ENCODE measurements at regions of chr19 and their contacts with region 1.

Region 1: DNA sequence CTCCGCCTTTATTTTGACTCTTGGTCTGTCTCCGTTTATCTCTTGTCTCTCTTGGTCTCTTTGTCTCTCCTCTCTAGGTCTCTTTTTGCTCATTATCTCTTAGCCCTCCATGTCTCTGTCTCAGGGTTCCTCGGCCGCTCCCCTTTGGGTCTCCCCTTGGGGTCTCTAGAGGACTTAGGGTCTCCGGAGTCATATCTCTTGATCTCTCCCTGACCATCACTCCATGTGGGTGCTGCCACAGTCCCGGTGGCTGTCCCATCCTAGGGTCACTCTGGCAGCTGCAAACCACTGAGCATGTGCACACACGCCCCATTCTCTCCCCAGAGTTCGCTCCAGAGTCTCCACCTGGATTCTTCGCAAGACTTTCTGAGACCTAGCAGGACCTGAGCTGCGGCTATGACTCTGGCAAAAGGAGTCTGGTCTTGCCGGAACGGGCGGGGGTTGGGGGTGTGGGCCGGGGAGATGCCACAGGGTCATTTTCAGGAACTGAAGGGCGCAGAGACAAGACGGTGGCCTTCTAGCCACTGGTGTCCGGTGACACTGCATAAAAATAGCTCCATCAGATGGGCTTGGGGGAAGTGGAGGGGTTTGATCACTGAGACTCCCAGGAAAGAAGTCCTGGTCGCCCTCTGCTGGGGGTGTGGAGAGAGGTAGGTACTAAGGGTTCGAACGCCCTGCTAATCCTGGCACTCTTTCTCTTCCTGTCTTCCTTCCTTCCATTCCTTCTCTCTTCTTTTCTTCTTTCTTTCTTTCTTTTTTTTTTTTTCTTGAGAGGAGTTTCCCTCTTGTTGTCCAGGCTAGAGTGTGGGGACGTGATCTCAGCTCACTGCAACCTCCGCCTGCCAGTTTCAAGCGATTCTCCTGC is 1.2 kb upstream of the KCNA7 start:
- DNase-seq: peak; percentile 65 to 73
- ATAC-seq: peak; percentile 77 to 86
- H3K4me3 ChIP-seq: peak overlapping the region; percentile 6; the same call in 1 of the 3 replicates
- H3K27ac ChIP-seq: 0 out of 6 replicates have a peak overlapping the region, but pooled peaks of 1 of the 2 experiments have one; percentile 9
- H3K4me1 ChIP-seq: peaks cover 16% of the 10 kb centered on the region
- CTCF ChIP-seq: peak; percentile 62
- EP300 ChIP-seq: no peak
- POLR2A ChIP-seq: no peak
- RAD21 ChIP-seq: peak; percentile 40 to 66; a peak in 4 of 5 replicates

Region 2: GRCh38 chr19:48975947-48976847 is 97.5 kb before region 1 on chr19:
- CTCF ChIA-PET with region 1: interaction called, 17 read pairs
- POLR2A ChIA-PET with region 1: no interaction called
- DNase-seq: peak in 1 of 2 experiments; percentile 47
- ATAC-seq: peak; percentile 46 to 72; a peak in 5 of 6 replicates
- H3K4me3 ChIP-seq: no peak overlapping the region
- H3K27ac ChIP-seq: no peak overlapping the region
- H3K4me1 ChIP-seq: peaks cover 13% of the 10 kb centered on the region
- CTCF ChIP-seq: no peak
- EP300 ChIP-seq: no peak
- POLR2A ChIP-seq: no peak
- RAD21 ChIP-seq: no peak

Region 3: DNA sequence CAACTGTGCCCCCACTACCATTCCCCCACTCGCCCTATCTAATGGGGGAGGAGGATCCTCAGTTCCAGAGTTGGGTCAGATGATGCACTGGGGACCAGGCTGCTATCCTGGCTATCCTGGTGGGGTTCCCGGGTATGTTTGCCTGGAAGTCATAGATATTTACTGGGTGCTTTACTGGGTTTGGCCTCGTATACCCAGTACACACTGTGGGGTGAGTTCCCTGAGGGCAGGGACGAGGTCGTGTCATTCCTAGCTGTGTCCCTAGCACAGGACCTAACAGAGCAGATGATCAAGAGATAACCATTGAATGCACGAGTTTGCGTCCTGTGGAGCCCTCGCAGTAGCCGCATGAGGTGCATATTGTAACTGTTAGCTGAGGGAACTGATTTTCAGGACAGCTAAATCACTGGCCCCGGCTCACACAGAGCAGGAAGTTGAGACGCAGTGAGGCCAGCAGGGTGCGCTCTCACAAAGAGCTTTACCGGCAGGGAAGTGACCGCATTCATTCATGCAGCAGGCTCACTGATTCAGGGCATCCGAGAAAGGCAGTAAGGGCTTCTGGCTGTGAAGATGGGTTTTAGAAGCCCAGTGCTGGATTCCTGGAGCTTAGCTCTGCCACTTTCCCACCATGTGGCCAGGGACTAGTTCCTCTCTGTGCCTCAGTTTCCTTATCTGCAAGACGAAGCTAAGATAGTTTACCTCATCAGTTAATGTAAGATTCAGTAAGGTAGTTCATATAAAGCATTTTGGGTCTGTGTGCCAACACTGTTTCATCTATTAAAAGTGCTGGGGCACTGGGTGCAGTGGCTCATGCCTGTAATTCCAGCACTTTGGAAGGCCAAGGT is 74.0 kb before region 1 on chr19:
- CTCF ChIA-PET with region 1: interaction called, 121 read pairs
- POLR2A ChIA-PET with region 1: interaction called, 4 read pairs
- DNase-seq: peak; percentile 81 to 85
- ATAC-seq: peak; percentile 84 to 89
- H3K4me3 ChIP-seq: no peak overlapping the region
- H3K27ac ChIP-seq: no peak overlapping the region
- H3K4me1 ChIP-seq: peaks cover 9% of the 10 kb centered on the region; the same call in 2 of the 3 replicates
- CTCF ChIP-seq: peak; percentile 82
- EP300 ChIP-seq: no peak
- POLR2A ChIP-seq: no peak
- RAD21 ChIP-seq: peak; percentile 69

Region 4: GRCh38 chr19:49017666-49018351 is 55.9 kb before region 1 on chr19:
- CTCF ChIA-PET with region 1: interaction called, 29 read pairs
- POLR2A ChIA-PET with region 1: no interaction called
- DNase-seq: peak in 1 of 2 experiments; percentile 52
- ATAC-seq: peak; percentile 27 to 66
- H3K4me3 ChIP-seq: peak overlapping the region; percentile 21; the same call in 1 of the 3 replicates
- H3K27ac ChIP-seq: peak overlapping the region in 1 of 2 experiments; percentile 36; a peak in 1 of 6 replicates
- H3K4me1 ChIP-seq: peaks cover 14% of the 10 kb centered on the region; the same call in 2 of the 3 replicates
- CTCF ChIP-seq: peak; percentile 33
- EP300 ChIP-seq: no peak
- POLR2A ChIP-seq: no peak
- RAD21 ChIP-seq: no peak

Region 5: DNA sequence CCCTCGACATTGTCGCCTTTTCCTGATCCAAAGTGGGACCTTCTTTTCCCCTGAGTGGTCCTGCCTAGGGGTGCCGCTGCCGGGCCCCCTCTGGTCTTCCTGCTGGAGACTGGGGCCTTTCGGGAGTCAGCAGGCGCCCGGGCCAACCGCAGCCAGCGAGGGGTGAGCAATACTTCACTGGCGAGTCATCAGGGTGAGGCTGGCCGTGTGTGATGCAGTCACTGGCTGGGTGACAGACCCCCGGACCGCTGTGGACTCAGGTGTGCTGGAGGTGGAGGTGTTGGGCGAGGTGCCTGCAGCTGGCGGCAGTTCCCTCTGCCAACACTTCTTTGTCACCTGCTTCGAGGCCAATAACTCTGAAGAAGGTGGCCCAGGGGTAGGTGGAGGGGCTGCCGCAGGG is 31.6 kb before region 1 on chr19:
- CTCF ChIA-PET with region 1: no interaction called
- POLR2A ChIA-PET with region 1: no interaction called
- DNase-seq: peak in 1 of 2 experiments; percentile 35
- ATAC-seq: 0 out of 6 replicates have a peak, but pooled peaks of 1 of the 2 experiments have one; percentile 20
- H3K4me3 ChIP-seq: no peak overlapping the region
- H3K27ac ChIP-seq: peak overlapping the region; percentile 21 to 65; a peak in 4 of 6 replicates
- H3K4me1 ChIP-seq: peaks cover 32% of the 10 kb centered on the region
- CTCF ChIP-seq: no peak
- EP300 ChIP-seq: no peak
- POLR2A ChIP-seq: no peak
- RAD21 ChIP-seq: no peak

Region 6: GRCh38 chr19:49056010-49056901 is 17.5 kb before region 1 on chr19:
- CTCF ChIA-PET with region 1: interaction called, 96 read pairs
- POLR2A ChIA-PET with region 1: no interaction called
- DNase-seq: peak; percentile 64 to 92
- ATAC-seq: peak; percentile 88 to 92
- H3K4me3 ChIP-seq: peak overlapping the region; percentile 54
- H3K27ac ChIP-seq: peak overlapping the region; percentile 64 to 87
- H3K4me1 ChIP-seq: peaks cover 11% of the 10 kb centered on the region
- CTCF ChIP-seq: peak; percentile 15; the same call in 1 of the 3 replicates
- EP300 ChIP-seq: no peak
- POLR2A ChIP-seq: peak; percentile 48; the same call in 1 of the 2 replicates
- RAD21 ChIP-seq: no peak

Region 7: DNA sequence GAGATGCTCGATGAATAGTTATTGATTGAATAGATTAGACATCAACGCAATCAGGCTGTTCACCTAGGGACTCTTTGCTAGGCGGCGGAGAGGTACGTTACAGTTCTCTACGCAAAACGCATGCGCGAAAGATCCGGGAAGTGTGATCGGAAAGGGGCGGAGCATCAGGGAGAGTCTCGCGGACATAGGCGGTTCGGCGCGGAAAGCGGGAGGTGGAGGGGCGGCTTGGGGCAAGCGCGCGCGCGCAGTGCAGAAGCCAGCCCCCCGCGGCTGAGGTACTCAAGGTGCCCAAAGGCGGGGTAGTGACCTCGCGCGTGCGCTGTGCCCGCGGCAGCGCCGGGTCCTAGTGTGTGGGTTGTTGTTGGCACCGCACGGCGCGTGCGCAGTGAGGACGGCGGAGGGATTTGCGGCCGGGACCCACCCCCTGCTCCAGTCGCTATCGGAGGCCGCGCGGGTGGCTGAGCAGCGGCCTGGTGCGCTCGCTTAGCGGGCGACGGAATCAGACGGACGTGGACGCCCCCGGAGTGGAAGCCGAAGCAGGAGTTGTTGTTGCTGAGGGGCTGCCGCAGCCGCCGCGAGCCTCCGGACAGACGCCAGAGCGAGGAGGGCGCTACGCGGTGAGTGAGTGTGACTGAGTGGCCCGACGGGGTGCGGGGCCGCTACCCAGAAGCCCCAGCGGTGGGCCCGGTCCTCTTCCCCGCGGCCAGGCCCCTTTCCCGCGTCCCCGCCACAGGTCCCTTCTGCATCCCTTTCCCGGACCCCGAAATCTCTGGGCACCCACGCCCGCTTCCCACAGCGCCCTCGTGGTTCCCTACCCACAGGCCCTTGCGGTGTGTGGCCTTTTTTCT is 11.5 kb after region 1 on chr19 and contains the start of gene SNRNP70:
- CTCF ChIA-PET with region 1: interaction called, 13 read pairs
- POLR2A ChIA-PET with region 1: no interaction called
- DNase-seq: peak; percentile 100
- ATAC-seq: peak; percentile 94 to 95
- H3K4me3 ChIP-seq: peak within 1 kb of the TSS; percentile 73
- H3K27ac ChIP-seq: peak within 1 kb of the TSS; percentile 88 to 91
- H3K4me1 ChIP-seq: peaks cover 20% of the 10 kb centered on the region
- CTCF ChIP-seq: no peak
- EP300 ChIP-seq: no peak
- POLR2A ChIP-seq: peak; percentile 94
- RAD21 ChIP-seq: no peak
- polyA plus RNA-seq, gene SNRNP70: 214 and 220 TPM in 2 replicates